Caco-2 (cell line): ENCODE measurements at regions of chr13 and their contacts with region 1.

Region 1: GRCh38 chr13:60329221-60329983 is 67.6 kb upstream of the TDRD3 start:
- DNase-seq: peak; percentile 83
- H3K4me3 ChIP-seq: no peak overlapping the region
- H3K4me3 Mint-ChIP-seq: no peak overlapping the region
- H3K27ac Mint-ChIP-seq: peak overlapping the region; percentile 10
- H3K4me1 ChIP-seq: peaks cover 35% of the 10 kb centered on the region
- H3K4me1 Mint-ChIP-seq: peaks cover 18% of the 10 kb centered on the region
- H3K27me3 ChIP-seq: no peaks in the 10 kb centered on the region
- H3K27me3 Mint-ChIP-seq: no peaks in the 10 kb centered on the region
- CTCF ChIP-seq: peak; percentile 70 to 81

Region 2: DNA sequence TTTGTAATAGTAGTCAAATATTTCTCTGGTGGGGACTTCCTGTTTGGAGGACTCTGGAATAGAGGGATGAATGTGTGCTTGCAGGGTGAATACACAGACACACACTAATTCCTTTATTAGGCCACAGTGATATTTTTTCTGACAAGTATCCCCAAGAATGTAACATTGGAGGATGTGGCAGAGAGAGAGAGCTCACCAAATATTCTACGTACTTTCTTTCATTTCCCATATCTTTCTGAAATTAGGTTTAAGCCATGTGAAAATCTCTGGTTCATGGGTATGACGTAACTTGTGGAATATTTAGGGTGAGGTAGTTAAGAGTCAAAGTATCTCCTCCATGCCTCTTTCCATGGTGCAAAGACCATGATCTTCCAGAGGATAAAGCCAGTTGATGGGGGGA is 629.1 kb before region 1 on chr13:
- CTCF ChIA-PET with region 1: no interaction called
- POLR2A ChIA-PET with region 1: no interaction called
- intact Hi-C with region 1: no loop called
- DNase-seq: no peak
- H3K4me3 ChIP-seq: no peak overlapping the region
- H3K4me3 Mint-ChIP-seq: no peak overlapping the region
- H3K27ac Mint-ChIP-seq: peak overlapping the region; percentile 20
- H3K4me1 ChIP-seq: peaks cover 76% of the 10 kb centered on the region
- H3K4me1 Mint-ChIP-seq: peaks cover 48% of the 10 kb centered on the region
- H3K27me3 ChIP-seq: no peaks in the 10 kb centered on the region
- H3K27me3 Mint-ChIP-seq: no peaks in the 10 kb centered on the region
- CTCF ChIP-seq: no peak

Region 3: GRCh38 chr13:59846843-59847620 is 482.4 kb before region 1 on chr13:
- CTCF ChIA-PET with region 1: no interaction called
- POLR2A ChIA-PET with region 1: no interaction called
- intact Hi-C with region 1: loop called (anchors 1 kb)
- DNase-seq: peak; percentile 24 to 43
- H3K4me3 ChIP-seq: no peak overlapping the region
- H3K4me3 Mint-ChIP-seq: no peak overlapping the region
- H3K27ac Mint-ChIP-seq: no peak overlapping the region
- H3K4me1 ChIP-seq: peaks cover 58% of the 10 kb centered on the region
- H3K4me1 Mint-ChIP-seq: peaks cover 55% of the 10 kb centered on the region
- H3K27me3 ChIP-seq: no peaks in the 10 kb centered on the region
- H3K27me3 Mint-ChIP-seq: no peaks in the 10 kb centered on the region
- CTCF ChIP-seq: no peak

Region 4: DNA sequence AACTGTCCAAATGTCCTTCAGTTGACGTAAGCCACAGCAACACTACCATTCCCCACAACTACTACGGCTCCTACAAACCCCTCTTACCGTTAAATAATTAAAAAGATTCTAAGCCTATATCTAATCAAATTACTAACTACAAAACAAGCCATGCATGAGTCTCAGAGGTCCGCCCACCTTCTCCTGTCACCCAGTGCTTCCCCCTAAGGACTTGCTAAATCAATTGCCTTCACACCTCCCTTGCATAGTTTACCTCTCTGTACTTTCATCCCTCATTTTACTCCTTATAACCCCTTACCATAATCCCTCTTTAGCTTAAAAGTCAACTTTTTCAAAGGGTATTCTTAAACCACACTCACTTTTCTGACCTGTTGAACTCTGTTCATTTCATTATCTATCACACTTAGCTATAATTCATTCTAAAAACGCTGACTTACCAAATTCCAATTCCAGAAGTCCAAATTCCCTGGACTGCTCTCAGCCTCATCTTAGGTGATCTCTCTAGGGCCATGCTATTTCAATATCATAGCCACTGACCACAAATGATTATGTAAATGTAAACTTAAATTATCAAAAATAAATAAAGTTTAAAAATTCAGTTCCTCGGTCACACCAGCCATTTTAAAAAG is 353.5 kb before region 1 on chr13:
- CTCF ChIA-PET with region 1: no interaction called
- POLR2A ChIA-PET with region 1: no interaction called
- intact Hi-C with region 1: loop called (anchors 2 kb)
- DNase-seq: no peak
- H3K4me3 ChIP-seq: no peak overlapping the region
- H3K4me3 Mint-ChIP-seq: no peak overlapping the region
- H3K27ac Mint-ChIP-seq: no peak overlapping the region
- H3K4me1 ChIP-seq: peaks cover 35% of the 10 kb centered on the region
- H3K4me1 Mint-ChIP-seq: peaks cover 9% of the 10 kb centered on the region
- H3K27me3 ChIP-seq: no peaks in the 10 kb centered on the region
- H3K27me3 Mint-ChIP-seq: no peaks in the 10 kb centered on the region
- CTCF ChIP-seq: no peak

Region 5: DNA sequence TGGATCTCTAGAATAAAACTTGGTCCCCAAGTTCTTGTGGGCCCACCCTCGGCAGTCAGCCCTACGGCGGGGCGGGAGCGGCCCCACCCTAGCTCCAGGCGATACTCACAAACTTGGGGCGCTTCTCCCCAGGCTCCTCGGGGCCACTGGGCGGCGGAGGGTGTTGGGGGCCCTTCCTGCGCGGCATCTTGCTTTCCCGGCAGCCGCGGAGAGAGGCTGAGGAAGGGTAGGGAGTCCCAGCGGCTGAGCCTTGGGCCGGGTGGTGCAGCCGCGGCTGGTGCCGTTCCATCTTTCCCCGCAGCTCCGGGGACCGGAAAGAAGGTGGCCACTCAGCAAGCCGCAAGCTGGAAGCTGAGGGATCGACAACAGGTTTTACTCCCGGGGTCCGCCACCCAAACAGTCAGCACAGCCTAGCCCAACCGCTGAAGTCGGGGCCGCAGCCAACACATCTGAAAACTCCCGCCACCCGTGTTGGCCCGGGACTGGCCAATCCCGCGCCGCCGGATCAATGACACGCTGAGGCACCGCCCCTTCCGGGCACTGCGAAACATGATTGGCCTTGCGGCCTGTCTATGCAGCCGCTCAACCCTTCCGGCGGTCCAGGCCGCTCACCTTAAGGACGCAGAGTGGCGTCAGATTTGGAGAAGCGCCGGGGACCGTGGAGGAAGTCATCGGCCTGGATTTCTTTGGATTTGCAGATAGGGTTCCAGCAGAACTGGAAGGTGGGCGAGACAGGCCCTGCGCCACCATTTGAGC is 165.7 kb before region 1 on chr13 and contains the start of gene DIAPH3:
- CTCF ChIA-PET with region 1: interaction called, 3 read pairs
- POLR2A ChIA-PET with region 1: no interaction called
- intact Hi-C with region 1: loop called (anchors 1 kb)
- DNase-seq: peak; percentile 97 to 98
- H3K4me3 ChIP-seq: peak within 1 kb of the TSS; percentile 87
- H3K4me3 Mint-ChIP-seq: peak within 1 kb of the TSS; percentile 91
- H3K27ac Mint-ChIP-seq: peak within 1 kb of the TSS; percentile 86
- H3K4me1 ChIP-seq: peaks cover 54% of the 10 kb centered on the region
- H3K4me1 Mint-ChIP-seq: peaks cover 51% of the 10 kb centered on the region
- H3K27me3 ChIP-seq: no peaks in the 10 kb centered on the region
- H3K27me3 Mint-ChIP-seq: no peaks in the 10 kb centered on the region
- CTCF ChIP-seq: no peak
- total RNA-seq, gene DIAPH3: 59.4 and 60.6 TPM in 2 replicates

Region 6: DNA sequence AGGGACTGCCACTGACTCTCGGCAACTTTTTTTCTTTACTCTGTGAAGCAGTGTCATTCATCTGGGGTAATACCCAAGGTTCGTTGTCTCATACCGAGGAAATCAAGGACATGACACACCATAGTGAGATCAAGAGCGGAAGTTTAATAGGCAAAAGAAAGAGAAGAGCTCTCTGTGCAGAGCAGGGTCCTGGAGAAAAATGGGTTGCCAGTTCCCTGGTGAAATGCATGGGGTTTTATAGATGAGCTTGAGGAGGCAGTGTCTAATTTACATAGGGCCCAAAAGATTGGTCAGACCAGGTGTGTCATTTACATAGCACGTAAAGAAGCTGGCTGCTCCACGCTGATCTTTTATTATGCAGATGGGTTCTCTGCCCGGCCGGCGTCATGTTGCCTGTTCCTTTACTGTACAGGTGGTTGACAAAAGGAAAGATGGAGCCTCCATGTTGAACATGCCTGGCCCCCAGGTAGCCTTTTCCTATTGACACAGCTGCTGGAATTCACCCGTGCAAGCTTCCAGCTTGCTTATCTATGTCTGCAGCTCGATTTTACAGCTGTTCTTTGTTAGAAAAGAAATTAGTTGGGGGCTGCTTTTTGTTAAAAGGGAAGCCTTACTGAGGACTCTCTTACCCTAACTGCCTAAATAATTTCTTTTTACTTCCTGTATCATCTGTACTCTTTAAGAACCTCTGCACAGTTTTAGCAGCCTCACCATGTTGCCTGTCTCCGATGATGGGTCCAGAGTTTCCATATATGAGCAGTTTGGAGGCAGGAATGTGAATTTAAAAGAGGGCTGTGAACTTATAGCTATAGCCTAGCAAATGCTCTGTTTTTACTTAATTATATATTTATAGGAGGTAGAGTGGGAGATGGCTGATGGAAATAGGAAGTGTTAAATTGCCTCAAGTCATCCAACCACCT is 67.7 kb before region 1 on chr13:
- CTCF ChIA-PET with region 1: no interaction called
- POLR2A ChIA-PET with region 1: interaction called, 4 read pairs
- intact Hi-C with region 1: loop called (anchors 1 kb)
- DNase-seq: peak; percentile 84 to 88
- H3K4me3 ChIP-seq: peak overlapping the region; percentile 17
- H3K4me3 Mint-ChIP-seq: peak overlapping the region; percentile 18
- H3K27ac Mint-ChIP-seq: peak overlapping the region; percentile 3
- H3K4me1 ChIP-seq: peaks cover 19% of the 10 kb centered on the region
- H3K4me1 Mint-ChIP-seq: peaks cover 6% of the 10 kb centered on the region
- H3K27me3 ChIP-seq: no peaks in the 10 kb centered on the region
- H3K27me3 Mint-ChIP-seq: no peaks in the 10 kb centered on the region
- CTCF ChIP-seq: no peak

Region 7: GRCh38 chr13:60273927-60274527 is 55.4 kb before region 1 on chr13:
- CTCF ChIA-PET with region 1: no interaction called
- POLR2A ChIA-PET with region 1: no interaction called
- intact Hi-C with region 1: loop called (anchors 1 kb)
- DNase-seq: peak; percentile 72 to 79
- H3K4me3 ChIP-seq: no peak overlapping the region
- H3K4me3 Mint-ChIP-seq: peak overlapping the region; percentile 31
- H3K27ac Mint-ChIP-seq: peak overlapping the region; percentile 92
- H3K4me1 ChIP-seq: peaks cover 53% of the 10 kb centered on the region
- H3K4me1 Mint-ChIP-seq: peaks cover 33% of the 10 kb centered on the region
- H3K27me3 ChIP-seq: no peaks in the 10 kb centered on the region
- H3K27me3 Mint-ChIP-seq: no peaks in the 10 kb centered on the region
- CTCF ChIP-seq: no peak

Region 8: DNA sequence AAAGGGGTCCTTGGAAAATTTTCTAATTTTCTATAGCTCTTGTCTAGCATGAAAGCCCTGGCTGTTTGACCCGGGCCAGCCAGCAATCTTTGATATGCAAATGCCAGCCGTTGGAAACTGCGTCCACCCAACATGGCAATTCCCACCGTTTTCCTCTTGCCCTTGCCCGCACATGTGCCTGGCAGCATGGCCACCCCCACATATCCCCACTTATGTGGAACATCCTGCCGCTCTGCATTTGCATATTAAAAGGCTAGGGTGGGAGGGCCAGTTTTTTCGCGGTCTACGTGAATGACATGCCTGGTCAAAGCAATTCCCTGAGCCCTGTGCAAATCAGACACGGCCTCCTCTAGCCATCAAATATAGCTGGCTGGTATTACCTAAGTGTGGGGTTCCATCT is 42.7 kb before region 1 on chr13:
- CTCF ChIA-PET with region 1: no interaction called
- POLR2A ChIA-PET with region 1: no interaction called
- intact Hi-C with region 1: no loop called
- DNase-seq: no peak
- H3K4me3 ChIP-seq: no peak overlapping the region
- H3K4me3 Mint-ChIP-seq: no peak overlapping the region
- H3K27ac Mint-ChIP-seq: no peak overlapping the region
- H3K4me1 ChIP-seq: no peaks in the 10 kb centered on the region
- H3K4me1 Mint-ChIP-seq: no peaks in the 10 kb centered on the region
- H3K27me3 ChIP-seq: no peaks in the 10 kb centered on the region
- H3K27me3 Mint-ChIP-seq: no peaks in the 10 kb centered on the region
- CTCF ChIP-seq: no peak

Region 9: GRCh38 chr13:60733933-60734332 is 404.5 kb after region 1 on chr13:
- CTCF ChIA-PET with region 1: no interaction called
- POLR2A ChIA-PET with region 1: no interaction called
- intact Hi-C with region 1: no loop called
- DNase-seq: no peak
- H3K4me3 ChIP-seq: no peak overlapping the region
- H3K4me3 Mint-ChIP-seq: no peak overlapping the region
- H3K27ac Mint-ChIP-seq: no peak overlapping the region
- H3K4me1 ChIP-seq: no peaks in the 10 kb centered on the region
- H3K4me1 Mint-ChIP-seq: no peaks in the 10 kb centered on the region
- H3K27me3 ChIP-seq: no peaks in the 10 kb centered on the region
- H3K27me3 Mint-ChIP-seq: peaks cover 3% of the 10 kb centered on the region
- CTCF ChIP-seq: no peak

Region 10: DNA sequence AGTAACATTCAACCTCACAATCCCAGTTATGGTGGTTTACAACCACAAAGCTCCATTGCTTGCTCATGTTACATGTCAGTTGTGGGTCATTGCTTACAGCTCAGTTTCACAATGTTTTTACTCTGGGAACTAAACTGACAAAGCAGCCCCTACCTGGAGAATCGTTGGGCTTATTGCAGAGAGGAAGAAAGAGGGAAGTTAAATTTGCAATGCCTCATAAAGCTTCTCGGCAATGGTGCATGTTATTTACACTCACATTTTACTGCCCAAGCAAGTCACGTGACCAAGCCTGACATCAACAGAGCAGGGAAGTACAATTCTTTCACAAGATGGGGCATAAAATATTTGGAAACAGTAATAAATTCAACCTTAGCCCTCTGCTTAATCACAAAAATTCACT is 509.2 kb after region 1 on chr13:
- CTCF ChIA-PET with region 1: no interaction called
- POLR2A ChIA-PET with region 1: no interaction called
- intact Hi-C with region 1: no loop called
- DNase-seq: no peak
- H3K4me3 ChIP-seq: no peak overlapping the region
- H3K4me3 Mint-ChIP-seq: no peak overlapping the region
- H3K27ac Mint-ChIP-seq: no peak overlapping the region
- H3K4me1 ChIP-seq: no peaks in the 10 kb centered on the region
- H3K4me1 Mint-ChIP-seq: no peaks in the 10 kb centered on the region
- H3K27me3 ChIP-seq: no peaks in the 10 kb centered on the region; the same call in 1 of the 2 replicates
- H3K27me3 Mint-ChIP-seq: peaks cover 7% of the 10 kb centered on the region
- CTCF ChIP-seq: no peak